Activated naive CD4-positive, alpha-beta T cell treated with anti-CD3 and anti-CD28 coated beads for 36 hours (primary cell): ENCODE measurements at regions of chr1 and their contacts with region 1.

Region 1: DNA sequence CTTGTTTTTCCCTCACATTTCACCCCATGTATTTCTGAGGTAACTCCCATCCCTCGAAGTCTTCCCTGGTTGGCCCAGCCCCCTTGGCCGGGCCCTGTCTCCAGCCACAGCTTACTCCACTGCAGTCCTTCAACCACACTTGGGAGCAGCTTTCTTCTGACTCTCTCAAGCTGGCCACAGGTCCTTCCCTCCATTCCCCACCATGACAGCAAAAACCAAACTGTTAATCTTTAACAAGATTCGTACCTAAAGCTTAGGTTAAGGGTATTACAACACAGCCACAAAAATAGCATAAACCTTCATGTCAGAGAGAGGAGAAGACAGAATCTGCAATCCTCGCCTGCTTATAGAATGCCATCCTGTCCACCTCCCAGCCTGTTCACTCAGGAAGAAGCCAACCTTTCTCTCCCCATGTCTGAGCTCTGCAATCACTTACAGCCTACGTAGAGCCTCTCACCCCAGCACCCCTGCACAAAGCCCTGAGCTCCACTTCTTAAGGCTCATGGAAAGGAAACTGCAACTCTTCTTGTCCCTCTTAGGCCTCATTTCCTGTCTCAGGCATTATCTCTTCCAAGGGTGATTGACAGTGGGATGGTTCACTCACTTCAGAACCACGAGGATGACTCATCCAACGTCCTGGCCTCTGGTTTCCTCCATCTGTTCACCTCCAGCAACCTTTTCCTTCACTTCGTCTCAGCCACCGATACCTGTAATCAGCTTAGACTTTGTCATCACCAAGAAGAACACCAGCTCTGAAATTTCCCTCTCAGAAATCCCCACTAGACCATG is 72.8 kb downstream of the CD2 start:
- DNase-seq: peak; percentile 92
- H3K4me3 Mint-ChIP-seq: peak overlapping the region; percentile 83
- H3K27ac Mint-ChIP-seq: peak overlapping the region; percentile 97
- H3K4me1 Mint-ChIP-seq: peaks cover 74% of the 10 kb centered on the region
- H3K27me3 Mint-ChIP-seq: no peaks in the 10 kb centered on the region

Region 2: DNA sequence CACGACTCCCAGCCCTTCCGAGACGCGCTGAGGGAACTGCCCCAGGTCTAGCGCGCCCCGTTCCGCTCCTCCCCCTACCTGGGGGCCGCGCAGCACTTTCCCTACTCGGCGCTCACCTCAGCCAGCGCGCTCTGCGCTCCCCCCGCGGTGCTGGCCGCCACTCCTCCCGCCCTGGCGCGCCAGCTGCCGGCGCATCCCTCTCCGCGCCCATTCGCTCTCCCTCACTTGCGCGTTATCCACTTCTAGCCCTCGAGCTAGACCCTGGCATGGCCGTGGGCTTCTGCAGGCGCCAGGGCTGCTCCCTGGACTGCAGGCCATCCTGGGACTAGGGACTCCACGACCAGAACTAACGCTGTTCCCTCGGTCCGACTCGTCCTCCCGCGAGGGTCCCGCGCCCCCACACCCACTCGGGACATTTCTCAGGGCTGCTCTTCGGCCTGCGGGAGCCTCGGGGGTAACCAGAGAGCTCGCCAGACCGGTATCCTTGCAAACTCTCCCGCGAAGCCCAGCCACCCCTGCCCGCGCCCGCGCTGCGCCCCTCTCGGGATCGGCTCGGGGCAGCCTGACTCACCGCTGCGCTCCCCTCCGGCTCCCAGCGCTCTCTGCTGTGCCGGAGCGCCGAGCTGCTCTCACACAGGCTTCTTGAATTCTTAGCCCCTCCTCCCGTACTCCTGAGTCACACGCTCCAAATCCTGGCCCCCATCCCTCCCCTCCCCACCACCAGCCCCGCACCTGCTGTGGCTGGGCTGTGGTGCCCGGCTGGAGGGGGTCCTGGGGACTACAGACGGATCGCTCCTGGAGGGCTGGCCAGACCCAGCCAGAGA is 1489.2 kb before region 1 on chr1 and contains the start of gene NGF:
- CTCF ChIA-PET with region 1: no interaction called
- intact Hi-C with region 1: no loop called
- DNase-seq: no peak
- H3K4me3 Mint-ChIP-seq: no peak within 1 kb of the TSS
- H3K27ac Mint-ChIP-seq: no peak within 1 kb of the TSS
- H3K4me1 Mint-ChIP-seq: no peaks in the 10 kb centered on the region
- H3K27me3 Mint-ChIP-seq: peaks cover 29% of the 10 kb centered on the region
- total RNA-seq, gene NGF: not detected

Region 3: GRCh38 chr1:116763787-116764465 is 63.1 kb before region 1 on chr1:
- CTCF ChIA-PET with region 1: interaction called, 30 read pairs
- intact Hi-C with region 1: loop called (anchors 1 kb)
- DNase-seq: peak; percentile 68
- H3K4me3 Mint-ChIP-seq: peak overlapping the region; percentile 100
- H3K27ac Mint-ChIP-seq: peak overlapping the region; percentile 100
- H3K4me1 Mint-ChIP-seq: peaks cover 87% of the 10 kb centered on the region
- H3K27me3 Mint-ChIP-seq: no peaks in the 10 kb centered on the region

Region 4: DNA sequence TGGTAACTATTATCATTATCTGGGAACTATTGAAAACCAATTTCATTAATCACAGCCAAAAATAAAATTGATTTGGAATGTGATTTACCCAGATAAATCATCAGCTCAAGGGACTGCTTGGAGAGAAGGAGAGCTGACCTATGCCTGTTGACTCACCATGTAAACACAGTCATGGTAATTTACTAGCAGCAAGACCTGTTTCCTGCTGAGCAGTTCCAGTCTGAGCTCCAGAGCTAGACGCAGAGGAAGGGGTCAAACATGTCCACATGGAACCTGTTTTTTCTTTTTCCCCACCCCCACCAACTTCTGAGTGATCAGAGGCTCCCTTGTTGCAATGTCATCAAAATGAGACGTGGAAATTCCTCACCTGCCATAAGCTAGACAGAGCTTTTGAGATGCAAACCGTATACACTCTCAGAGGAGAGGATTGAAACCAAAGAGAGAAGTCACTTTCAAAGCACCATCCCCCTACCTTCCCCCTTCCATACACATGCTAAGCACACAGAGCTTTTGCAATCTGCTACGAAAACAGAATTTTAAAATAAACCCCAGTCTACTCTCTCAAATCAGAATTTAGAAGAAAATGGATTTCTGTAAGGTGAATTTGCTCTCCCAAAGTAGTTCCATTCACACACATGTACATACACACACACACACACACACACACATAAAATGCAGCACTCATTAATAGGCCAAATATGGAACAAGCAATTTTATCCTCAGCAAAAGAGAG is 26.8 kb after region 1 on chr1:
- CTCF ChIA-PET with region 1: interaction called, 4 read pairs
- intact Hi-C with region 1: loop called (anchors 1 kb)
- DNase-seq: peak; percentile 45
- H3K4me3 Mint-ChIP-seq: no peak overlapping the region
- H3K27ac Mint-ChIP-seq: peak overlapping the region; percentile 60
- H3K4me1 Mint-ChIP-seq: peaks cover 36% of the 10 kb centered on the region
- H3K27me3 Mint-ChIP-seq: no peaks in the 10 kb centered on the region

Region 5: GRCh38 chr1:116881879-116882520 is 55.0 kb after region 1 on chr1:
- CTCF ChIA-PET with region 1: interaction called, 7 read pairs
- intact Hi-C with region 1: loop called (anchors 1 kb)
- DNase-seq: peak; percentile 77
- H3K4me3 Mint-ChIP-seq: no peak overlapping the region
- H3K27ac Mint-ChIP-seq: no peak overlapping the region
- H3K4me1 Mint-ChIP-seq: peaks cover 12% of the 10 kb centered on the region
- H3K27me3 Mint-ChIP-seq: no peaks in the 10 kb centered on the region

Region 6: DNA sequence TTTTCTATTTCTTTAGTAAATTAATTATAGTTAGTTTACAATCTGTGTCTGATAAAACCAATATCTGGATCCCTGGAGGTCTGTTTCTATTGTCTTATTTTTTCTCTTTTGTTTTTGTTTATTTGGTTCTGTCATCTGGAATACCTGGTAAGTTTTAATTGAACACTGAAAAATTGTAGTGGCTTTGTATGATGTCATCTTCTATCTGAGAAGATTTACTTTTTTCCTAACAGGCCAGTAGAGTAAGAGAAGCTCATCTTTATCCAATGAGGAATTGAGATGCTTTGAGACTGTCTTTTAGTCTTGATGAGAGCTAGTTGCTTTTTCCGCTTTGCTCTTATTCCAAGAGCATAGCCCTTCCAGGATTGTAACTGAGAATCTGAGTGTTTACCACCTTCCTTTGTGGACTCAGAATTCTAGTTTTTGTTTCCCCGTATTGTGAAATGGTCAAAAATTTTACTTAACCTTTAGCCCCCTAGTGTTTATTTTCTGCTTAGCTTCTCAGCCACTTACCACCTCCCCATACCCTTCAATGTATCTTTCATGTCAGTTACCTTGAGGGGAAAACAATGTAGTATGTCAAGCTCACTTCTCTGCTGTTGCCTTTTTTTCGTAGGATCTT is 107.7 kb after region 1 on chr1:
- CTCF ChIA-PET with region 1: interaction called, 4 read pairs
- intact Hi-C with region 1: loop called (anchors 1 kb)
- DNase-seq: no peak
- H3K4me3 Mint-ChIP-seq: no peak overlapping the region
- H3K27ac Mint-ChIP-seq: no peak overlapping the region
- H3K4me1 Mint-ChIP-seq: peaks cover 18% of the 10 kb centered on the region
- H3K27me3 Mint-ChIP-seq: no peaks in the 10 kb centered on the region

Region 7: GRCh38 chr1:117051224-117052064 is 224.4 kb after region 1 on chr1:
- CTCF ChIA-PET with region 1: interaction called, 4 read pairs
- intact Hi-C with region 1: loop called (anchors 1 kb)
- DNase-seq: peak; percentile 69
- H3K4me3 Mint-ChIP-seq: peak overlapping the region; percentile 45
- H3K27ac Mint-ChIP-seq: peak overlapping the region; percentile 28
- H3K4me1 Mint-ChIP-seq: peaks cover 61% of the 10 kb centered on the region
- H3K27me3 Mint-ChIP-seq: no peaks in the 10 kb centered on the region